AG04449 (cell line): ENCODE measurements at regions of chr9 and their contacts with region 1.

Region 1: GRCh38 chr9:70630971-70631370 is 216.5 kb upstream of the KLF9 start:
- DNase-seq: no peak
- H3K4me3 ChIP-seq: no peak overlapping the region
- CTCF ChIP-seq: no peak

Region 2: DNA sequence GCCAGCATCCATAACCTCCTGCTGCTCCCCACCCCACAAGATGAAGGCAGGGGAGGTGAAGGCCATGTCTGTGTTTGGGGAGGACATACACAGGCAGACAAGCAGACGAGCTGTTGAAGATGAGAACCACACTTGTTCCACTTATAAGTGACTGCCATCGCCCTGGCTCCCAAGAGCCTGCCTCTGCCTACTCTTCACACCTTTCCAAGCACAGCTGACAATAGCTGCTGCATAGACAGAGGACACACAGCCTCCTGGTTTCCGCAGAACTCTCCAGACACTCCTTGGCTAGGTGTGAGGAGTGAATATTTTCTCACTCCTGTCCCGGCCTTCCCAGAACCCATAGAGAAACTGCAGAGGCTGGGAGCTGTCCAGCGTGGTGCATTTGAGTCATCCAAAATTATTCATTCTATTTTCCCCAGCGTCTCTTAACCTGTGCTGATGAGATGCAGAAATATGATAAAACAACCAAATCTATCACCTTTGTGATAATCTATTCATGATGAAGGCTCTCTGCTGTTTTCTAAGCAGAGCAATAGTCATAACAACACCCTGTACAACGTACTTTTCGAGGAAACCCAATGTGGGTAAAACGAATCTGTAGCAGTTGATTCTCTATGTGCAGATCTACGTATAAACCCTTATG is 241.2 kb before region 1 on chr9:
- CTCF ChIA-PET with region 1: no interaction called
- POLR2A ChIA-PET with region 1: no interaction called
- DNase-seq: no peak
- H3K4me3 ChIP-seq: no peak overlapping the region
- CTCF ChIP-seq: no peak

Region 3: GRCh38 chr9:70451765-70452164 is 179.2 kb before region 1 on chr9:
- CTCF ChIA-PET with region 1: no interaction called
- POLR2A ChIA-PET with region 1: no interaction called
- DNase-seq: no peak
- H3K4me3 ChIP-seq: no peak overlapping the region
- CTCF ChIP-seq: no peak

Region 4: DNA sequence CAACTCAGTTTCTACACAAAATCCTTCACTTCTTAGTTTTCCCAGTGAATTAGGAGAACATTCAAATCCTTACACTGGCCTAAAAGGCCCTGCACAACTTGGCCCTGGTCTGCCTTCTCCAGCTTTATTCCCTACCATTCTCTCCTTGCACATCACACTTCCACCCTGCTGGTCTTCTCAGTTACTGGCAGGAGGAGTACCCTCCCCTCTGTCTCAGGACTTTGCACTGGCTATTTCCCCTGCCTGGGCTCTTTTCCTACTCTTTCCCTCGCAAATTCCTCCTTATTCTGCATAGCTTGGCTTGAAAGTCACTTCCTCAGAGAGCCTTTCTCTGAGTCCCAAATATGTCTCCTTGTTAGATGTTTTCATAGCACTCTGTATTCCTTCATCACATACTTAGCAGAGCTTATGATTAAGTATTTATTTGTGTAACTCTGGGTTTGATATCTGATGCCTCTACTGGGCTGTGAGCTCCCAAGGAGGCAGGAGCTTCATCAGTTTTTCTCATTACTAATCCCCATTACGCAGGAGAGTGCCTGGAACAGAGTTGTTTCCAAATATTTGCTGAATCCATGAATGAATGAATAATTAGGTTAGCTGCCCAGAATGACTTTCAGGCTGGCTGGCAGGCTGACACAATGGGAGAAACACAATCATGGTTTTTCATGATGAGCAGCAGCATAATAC is 56.7 kb before region 1 on chr9:
- CTCF ChIA-PET with region 1: no interaction called
- POLR2A ChIA-PET with region 1: no interaction called
- DNase-seq: peak; percentile 85
- H3K4me3 ChIP-seq: no peak overlapping the region
- CTCF ChIP-seq: no peak

Region 5: GRCh38 chr9:71249729-71250317 is 618.9 kb after region 1 on chr9:
- CTCF ChIA-PET with region 1: interaction called, 259 read pairs
- POLR2A ChIA-PET with region 1: no interaction called
- DNase-seq: peak; percentile 33
- H3K4me3 ChIP-seq: no peak overlapping the region
- CTCF ChIP-seq: peak; percentile 70